CD4-positive, alpha-beta T cell (primary cell): ENCODE measurements at regions of chr3 and their contacts with region 1.

Region 1: GRCh38 chr3:18559331-18559842 is 134.2 kb upstream of the SATB1 start:
- DNase-seq: peak in 10 of 14 experiments; percentile 6 to 72 (median 28)
- ATAC-seq: peak; percentile 60
- H3K4me3 ChIP-seq: no peak overlapping the region
- H3K4me3 Mint-ChIP-seq: peak overlapping the region; percentile 48
- H3K27ac ChIP-seq: no peak overlapping the region
- H3K27ac Mint-ChIP-seq: peak overlapping the region; percentile 45
- H3K4me1 ChIP-seq: peaks cover 13% of the 10 kb centered on the region
- H3K4me1 Mint-ChIP-seq: peaks cover 57% of the 10 kb centered on the region
- H3K27me3 ChIP-seq: no peaks in the 10 kb centered on the region
- H3K27me3 Mint-ChIP-seq: no peaks in the 10 kb centered on the region
- CTCF ChIP-seq: peak; percentile 81

Region 2: DNA sequence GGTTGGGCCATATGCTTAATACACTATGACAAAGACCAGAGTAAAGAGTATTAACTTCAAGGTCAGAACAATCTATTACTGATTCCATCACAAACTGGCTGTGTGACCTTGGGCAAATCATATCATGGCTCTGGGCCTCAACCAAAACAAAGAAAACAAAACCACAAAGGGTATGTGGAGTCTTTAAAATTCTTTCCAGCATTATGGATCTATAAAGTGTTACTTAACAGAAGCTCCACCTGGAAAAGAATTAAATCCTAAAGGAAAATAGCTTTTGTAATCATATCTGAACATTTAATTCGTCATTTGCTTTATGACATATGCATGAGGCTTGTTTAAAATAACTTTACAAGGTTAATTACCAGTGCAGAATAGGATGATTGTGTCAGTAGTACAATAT is 399.7 kb before region 1 on chr3:
- CTCF ChIA-PET with region 1: no interaction called
- POLR2A ChIA-PET with region 1: no interaction called
- intact Hi-C with region 1: no loop called
- DNase-seq: no peak
- ATAC-seq: no peak
- H3K4me3 ChIP-seq: no peak overlapping the region
- H3K4me3 Mint-ChIP-seq: no peak overlapping the region
- H3K27ac ChIP-seq: no peak overlapping the region
- H3K27ac Mint-ChIP-seq: no peak overlapping the region
- H3K4me1 ChIP-seq: no peaks in the 10 kb centered on the region
- H3K4me1 Mint-ChIP-seq: no peaks in the 10 kb centered on the region
- H3K27me3 ChIP-seq: no peaks in the 10 kb centered on the region
- H3K27me3 Mint-ChIP-seq: no peaks in the 10 kb centered on the region
- CTCF ChIP-seq: no peak

Region 3: GRCh38 chr3:18618723-18619122 is 59.3 kb after region 1 on chr3:
- CTCF ChIA-PET with region 1: no interaction called
- POLR2A ChIA-PET with region 1: no interaction called
- intact Hi-C with region 1: no loop called
- DNase-seq: no peak
- ATAC-seq: no peak
- H3K4me3 ChIP-seq: no peak overlapping the region
- H3K4me3 Mint-ChIP-seq: no peak overlapping the region
- H3K27ac ChIP-seq: no peak overlapping the region
- H3K27ac Mint-ChIP-seq: no peak overlapping the region
- H3K4me1 ChIP-seq: no peaks in the 10 kb centered on the region
- H3K4me1 Mint-ChIP-seq: peaks cover under 1% of the 10 kb centered on the region
- H3K27me3 ChIP-seq: no peaks in the 10 kb centered on the region
- H3K27me3 Mint-ChIP-seq: no peaks in the 10 kb centered on the region
- CTCF ChIP-seq: no peak

Region 4: DNA sequence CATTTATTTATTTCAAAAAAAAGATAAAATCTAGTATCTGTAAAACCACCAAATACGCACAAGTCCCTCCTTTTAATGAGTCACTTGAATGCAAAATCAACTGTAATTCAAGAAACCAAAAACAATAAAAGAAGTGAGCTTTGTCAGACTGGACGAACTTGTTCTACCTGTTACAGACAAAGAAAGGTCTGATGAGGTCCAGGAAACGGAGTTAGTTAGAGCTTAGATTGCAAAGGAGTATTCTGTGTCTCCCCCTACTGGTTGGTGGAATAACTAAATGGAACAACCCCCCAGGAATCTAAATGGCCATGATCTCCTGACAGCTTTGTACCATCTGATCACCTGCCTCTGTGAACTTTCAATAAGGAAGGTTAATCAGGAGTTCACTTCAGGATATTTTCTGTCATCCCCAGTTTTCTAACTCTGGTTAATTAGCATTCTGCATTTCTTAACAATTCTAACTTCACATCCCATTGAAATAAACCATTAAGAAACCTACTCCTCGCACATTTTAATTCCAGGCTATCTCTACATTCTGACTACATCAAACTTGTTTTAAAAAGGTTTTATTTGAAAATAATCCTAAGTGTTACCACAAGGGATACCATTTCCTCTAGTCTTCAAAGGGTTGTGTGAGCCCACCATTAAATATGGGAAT is 198.8 kb after region 1 on chr3:
- CTCF ChIA-PET with region 1: interaction called, 38 read pairs
- POLR2A ChIA-PET with region 1: interaction called, 30 read pairs
- intact Hi-C with region 1: loop called (anchors 1 kb)
- DNase-seq: peak in 7 of 14 experiments; percentile 3 to 90 (median 47)
- ATAC-seq: peak; percentile 97
- H3K4me3 ChIP-seq: no peak overlapping the region
- H3K4me3 Mint-ChIP-seq: peak overlapping the region; percentile 5
- H3K27ac ChIP-seq: no peak overlapping the region
- H3K27ac Mint-ChIP-seq: peak overlapping the region; percentile 21
- H3K4me1 ChIP-seq: no peaks in the 10 kb centered on the region
- H3K4me1 Mint-ChIP-seq: peaks cover 56% of the 10 kb centered on the region
- H3K27me3 ChIP-seq: no peaks in the 10 kb centered on the region
- H3K27me3 Mint-ChIP-seq: no peaks in the 10 kb centered on the region
- CTCF ChIP-seq: peak; percentile 83